Sciatic nerve (tissue), 2 donors: ENCODE measurements at regions of chr4 and their contacts with region 1.

Region 1: GRCh38 chr4:54139332-54139731 is 39.4 kb downstream of the GSX2 start:
- DNase-seq: no peak
- ATAC-seq: peak; percentile 32

Region 2: GRCh38 chr4:53507671-53508286 is 631.6 kb before region 1 on chr4:
- intact Hi-C with region 1: no loop called
- DNase-seq: peak; percentile 76
- ATAC-seq: peak; percentile 88

Region 3: GRCh38 chr4:54173281-54173912 is 34.1 kb after region 1 on chr4:
- intact Hi-C with region 1: no loop called
- DNase-seq: no peak
- ATAC-seq: no peak

Region 4: GRCh38 chr4:55184600-55185523 is 1045.5 kb after region 1 on chr4:
- intact Hi-C with region 1: loop called (anchors 5 kb)
- DNase-seq: no peak
- ATAC-seq: peak; percentile 90